ENCODE measurements at regions of chr2 and their contacts with region 1.

Region 1: GRCh38 chr2:10832203-10832936 is 19.8 kb upstream of the PDIA6 start:
- DNase-seq: peak; percentile 87 to 88
- ATAC-seq: peak; percentile 72 to 91
- H3K4me3 ChIP-seq: no peak overlapping the region
- H3K27ac ChIP-seq: peak overlapping the region in 1 of 2 experiments; percentile 43; a peak in 1 of 6 replicates
- H3K4me1 ChIP-seq: no peaks in the 10 kb centered on the region
- CTCF ChIP-seq: peak; percentile 99
- EP300 ChIP-seq: no peak
- POLR2A ChIP-seq: no peak
- RAD21 ChIP-seq: peak; percentile 99 to 100

Region 2: GRCh38 chr2:10591207-10591606 is 241.2 kb before region 1 on chr2:
- CTCF ChIA-PET with region 1: no interaction called
- POLR2A ChIA-PET with region 1: no interaction called
- DNase-seq: no peak
- ATAC-seq: no peak
- H3K4me3 ChIP-seq: no peak overlapping the region
- H3K27ac ChIP-seq: no peak overlapping the region
- H3K4me1 ChIP-seq: peaks cover 8% of the 10 kb centered on the region; the same call in 2 of the 3 replicates
- CTCF ChIP-seq: no peak
- EP300 ChIP-seq: no peak
- POLR2A ChIP-seq: no peak
- RAD21 ChIP-seq: no peak

Region 3: GRCh38 chr2:10844097-10844496 is 11.7 kb after region 1 on chr2:
- CTCF ChIA-PET with region 1: interaction called, 45 read pairs
- POLR2A ChIA-PET with region 1: no interaction called
- DNase-seq: peak in 1 of 2 experiments; percentile 52
- ATAC-seq: peak; percentile 70 to 93; a peak in 5 of 6 replicates
- H3K4me3 ChIP-seq: no peak overlapping the region
- H3K27ac ChIP-seq: no peak overlapping the region; a peak in 1 of 6 replicates
- H3K4me1 ChIP-seq: peaks cover 9% of the 10 kb centered on the region; the same call in 1 of the 3 replicates
- CTCF ChIP-seq: no peak
- EP300 ChIP-seq: no peak
- POLR2A ChIP-seq: no peak
- RAD21 ChIP-seq: no peak

Region 4: GRCh38 chr2:10883801-10884478 is 51.6 kb after region 1 on chr2:
- CTCF ChIA-PET with region 1: interaction called, 18 read pairs
- POLR2A ChIA-PET with region 1: no interaction called
- DNase-seq: no peak
- ATAC-seq: peak in 1 of 2 experiments; percentile 44; a peak in 3 of 6 replicates
- H3K4me3 ChIP-seq: no peak overlapping the region
- H3K27ac ChIP-seq: peak overlapping the region in 1 of 2 experiments; percentile 6; a peak in 2 of 6 replicates
- H3K4me1 ChIP-seq: peaks cover 21% of the 10 kb centered on the region
- CTCF ChIP-seq: no peak
- EP300 ChIP-seq: no peak
- POLR2A ChIP-seq: no peak
- RAD21 ChIP-seq: no peak

Region 5: GRCh38 chr2:10900216-10901109 is 68.1 kb after region 1 on chr2:
- CTCF ChIA-PET with region 1: interaction called, 29 read pairs
- POLR2A ChIA-PET with region 1: no interaction called
- DNase-seq: peak; percentile 61 to 75
- ATAC-seq: peak; percentile 79 to 92
- H3K4me3 ChIP-seq: no peak overlapping the region
- H3K27ac ChIP-seq: peak overlapping the region; percentile 48 to 51; a peak in 5 of 6 replicates
- H3K4me1 ChIP-seq: peaks cover 22% of the 10 kb centered on the region
- CTCF ChIP-seq: peak; percentile 42
- EP300 ChIP-seq: no peak
- POLR2A ChIP-seq: no peak
- RAD21 ChIP-seq: peak; percentile 23 to 48; a peak in 3 of 5 replicates

Region 6: DNA sequence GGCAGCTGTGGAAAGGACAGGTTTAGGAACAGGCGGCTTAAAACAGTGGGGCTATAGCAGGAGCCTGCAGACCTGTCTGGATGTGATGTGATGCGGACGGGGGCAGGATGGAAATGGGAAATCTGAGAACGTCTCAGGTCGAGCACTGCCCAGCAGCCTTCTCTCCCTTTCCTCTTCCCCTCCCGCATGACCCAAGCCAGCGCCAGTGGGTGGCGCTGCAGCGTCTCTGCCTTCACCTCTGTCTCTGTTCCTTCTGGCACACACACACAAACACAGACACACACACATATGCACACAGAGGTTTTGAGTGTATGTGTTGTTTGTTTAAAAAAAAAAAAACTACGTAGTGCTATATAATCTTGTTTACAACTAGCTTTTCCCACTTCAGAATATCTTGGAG is 240.9 kb after region 1 on chr2:
- CTCF ChIA-PET with region 1: interaction called, 14 read pairs
- POLR2A ChIA-PET with region 1: no interaction called
- DNase-seq: peak in 1 of 2 experiments; percentile 54
- ATAC-seq: peak; percentile 51 to 85; a peak in 4 of 6 replicates
- H3K4me3 ChIP-seq: no peak overlapping the region
- H3K27ac ChIP-seq: no peak overlapping the region
- H3K4me1 ChIP-seq: no peaks in the 10 kb centered on the region
- CTCF ChIP-seq: peak; percentile 39
- EP300 ChIP-seq: no peak
- POLR2A ChIP-seq: no peak
- RAD21 ChIP-seq: peak; percentile 28 to 30; a peak in 3 of 5 replicates

Region 7: GRCh38 chr2:11112870-11113452 is 280.6 kb after region 1 on chr2:
- CTCF ChIA-PET with region 1: interaction called, 1,025 read pairs
- POLR2A ChIA-PET with region 1: no interaction called
- DNase-seq: no peak
- ATAC-seq: no peak
- H3K4me3 ChIP-seq: no peak overlapping the region
- H3K27ac ChIP-seq: no peak overlapping the region
- H3K4me1 ChIP-seq: no peaks in the 10 kb centered on the region
- CTCF ChIP-seq: no peak
- EP300 ChIP-seq: no peak
- POLR2A ChIP-seq: no peak
- RAD21 ChIP-seq: no peak

Region 8: DNA sequence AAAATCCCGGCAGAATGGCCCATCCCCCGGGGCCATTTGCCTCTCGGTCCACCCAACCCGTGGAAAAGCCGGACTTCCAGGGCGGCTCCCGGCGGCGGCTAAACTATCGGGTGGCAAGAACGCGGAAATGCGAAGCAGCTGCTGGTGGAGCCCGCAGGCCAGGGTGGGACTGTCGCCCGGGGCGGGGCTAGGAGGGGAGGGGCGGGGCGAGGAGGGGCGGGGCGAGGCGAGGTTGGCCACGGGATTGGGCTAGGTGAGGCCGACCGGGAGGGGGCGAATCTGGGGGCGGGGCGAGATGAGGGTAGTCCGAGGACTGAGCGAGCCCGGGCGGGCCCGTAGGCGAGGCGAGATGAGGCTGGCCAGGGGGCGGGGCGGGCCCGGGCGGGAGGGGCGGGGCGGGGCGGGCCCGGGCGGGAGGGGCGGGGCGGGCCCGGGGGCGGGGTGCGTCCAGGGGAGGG is 322.6 kb after region 1 on chr2:
- CTCF ChIA-PET with region 1: interaction called, 16 read pairs
- POLR2A ChIA-PET with region 1: interaction called, 7 read pairs
- DNase-seq: peak; percentile 97 to 99
- ATAC-seq: peak; percentile 84 to 85
- H3K4me3 ChIP-seq: peak overlapping the region; percentile 72
- H3K27ac ChIP-seq: peak overlapping the region; percentile 87 to 90
- H3K4me1 ChIP-seq: peaks cover 14% of the 10 kb centered on the region
- CTCF ChIP-seq: no peak
- EP300 ChIP-seq: no peak
- POLR2A ChIP-seq: peak; percentile 78
- RAD21 ChIP-seq: peak in 1 of 2 experiments; percentile 13; a peak in 1 of 5 replicates